ENCODE measurements at regions of chr5 and their contacts with region 1.

Region 1: DNA sequence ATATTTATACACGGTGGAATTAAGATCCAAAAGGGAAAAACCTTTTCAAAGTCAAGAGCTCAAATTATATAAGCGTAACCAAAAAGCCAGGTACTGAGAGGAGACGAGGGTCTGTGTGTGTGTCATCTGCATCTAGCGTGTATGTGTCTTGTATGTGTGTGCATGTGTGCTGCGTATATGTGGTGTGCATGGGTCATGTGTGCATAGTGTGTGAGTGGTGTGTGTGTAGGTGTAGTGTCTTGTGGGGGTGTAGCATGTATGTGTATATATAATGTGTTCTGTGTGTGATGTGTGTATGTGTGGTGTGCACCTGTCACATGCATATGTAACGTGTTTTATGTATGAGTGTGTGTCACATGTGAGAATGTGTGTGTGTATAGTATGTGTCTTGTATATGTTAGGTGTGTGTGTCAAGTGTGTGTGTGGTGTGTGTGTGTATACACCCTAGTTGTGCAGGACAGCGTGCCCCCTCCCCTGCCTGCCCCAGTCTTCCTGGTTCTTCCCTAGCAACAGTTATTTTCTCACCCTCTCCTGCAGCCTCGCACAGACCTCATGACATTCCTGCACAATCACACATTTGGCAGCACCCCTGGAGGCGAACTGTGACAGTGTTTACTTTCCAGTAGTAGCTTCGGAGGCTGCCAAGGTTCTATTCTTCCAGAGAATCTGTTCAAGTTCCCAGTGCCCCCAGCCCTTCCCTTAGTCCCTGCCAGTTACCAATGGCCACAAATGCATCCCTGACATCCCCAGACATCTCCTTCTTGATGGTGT is 27.1 kb upstream of the TNIP1 start:
- DNase-seq: peak in 2 of 3 donors; percentile 65 to 66
- ATAC-seq: peak; percentile 53
- H3K4me3 ChIP-seq: no peak overlapping the region
- H3K4me1 ChIP-seq: peaks cover 26% of the 10 kb centered on the region
- CTCF ChIP-seq: no peak

Region 2: DNA sequence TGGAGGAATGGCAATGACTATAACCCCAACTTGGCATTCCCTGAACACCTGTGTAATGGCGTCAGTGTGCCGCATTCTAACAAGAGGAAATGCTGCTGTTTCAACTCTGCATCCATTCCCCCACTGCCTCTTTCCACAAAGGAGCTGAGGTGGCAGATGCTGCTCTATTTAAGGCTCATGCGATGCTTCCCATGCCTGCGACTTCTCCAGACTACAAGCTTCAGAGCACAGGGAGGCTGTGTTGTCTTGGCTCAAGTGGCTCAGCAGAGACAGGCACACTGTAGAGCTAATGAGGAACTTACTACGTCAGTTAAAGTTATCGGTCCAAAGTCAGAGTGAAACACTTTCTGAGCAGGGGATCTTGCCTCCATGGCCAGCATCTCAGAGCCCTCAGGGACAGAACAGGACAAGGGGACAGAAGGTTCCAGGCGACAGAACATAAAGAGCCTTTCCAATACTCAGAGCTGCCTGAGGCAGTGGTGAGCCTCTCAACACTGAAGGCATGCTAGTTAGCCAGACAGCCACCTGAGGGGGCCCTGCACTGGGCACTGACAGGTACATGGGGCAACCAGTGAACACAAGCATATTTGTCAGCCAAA is 48.9 kb before region 1 on chr5:
- intact Hi-C with region 1: loop called in 1 of 2 experiments (anchors 5 kb)
- DNase-seq: peak in 1 of 3 donors; percentile 39
- ATAC-seq: no peak
- H3K4me3 ChIP-seq: no peak overlapping the region
- H3K4me1 ChIP-seq: peaks cover 14% of the 10 kb centered on the region
- CTCF ChIP-seq: no peak

Region 3: DNA sequence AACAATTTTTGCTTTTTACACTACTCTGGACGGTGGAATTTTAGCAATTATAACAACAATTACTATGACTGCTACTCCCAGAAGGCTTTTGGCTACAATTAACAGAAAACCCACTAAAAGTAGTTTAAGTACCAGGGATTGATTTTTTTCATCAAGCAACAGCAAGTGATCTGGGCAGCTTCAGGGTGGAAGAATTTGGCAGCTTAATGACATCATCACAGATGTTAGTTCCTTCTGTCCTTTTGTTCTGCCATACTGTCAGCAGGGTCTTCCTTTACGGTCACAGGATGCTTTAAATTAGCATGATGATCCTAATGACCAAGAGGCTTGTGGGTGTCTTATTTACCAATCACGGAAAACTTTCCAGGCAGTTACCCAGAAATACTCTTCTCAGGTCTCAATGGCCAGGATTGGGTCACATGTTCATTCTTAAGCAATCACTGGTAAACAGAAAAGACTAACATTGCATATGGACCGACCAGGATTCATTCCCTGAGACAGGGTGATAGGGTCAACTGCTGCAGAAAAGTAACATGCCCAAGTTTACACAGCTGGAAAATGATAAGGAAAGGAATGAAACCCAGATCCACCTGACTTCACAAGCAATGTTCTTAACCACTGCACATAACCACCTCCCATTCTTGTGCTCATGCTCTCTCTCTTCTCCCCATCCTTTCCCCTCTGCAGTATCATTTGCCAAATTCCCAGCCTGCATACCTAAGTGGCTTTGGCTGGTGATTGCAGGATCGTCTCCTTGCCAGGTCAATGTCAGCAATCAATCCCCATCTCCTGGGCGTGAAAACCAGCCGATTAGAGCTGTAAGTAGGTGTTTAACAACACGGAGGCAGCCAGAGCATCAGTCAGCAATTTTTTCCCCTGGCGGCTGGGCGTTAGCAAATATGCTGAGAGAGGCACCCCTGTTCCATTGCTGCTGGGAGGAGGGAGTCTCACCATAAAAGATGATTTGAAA is 1077.6 kb after region 1 on chr5:
- intact Hi-C with region 1: no loop called
- DNase-seq: no peak
- ATAC-seq: no peak
- H3K4me3 ChIP-seq: no peak overlapping the region
- H3K4me1 ChIP-seq: no peaks in the 10 kb centered on the region
- CTCF ChIP-seq: no peak